Transverse colon (tissue), 4 donors: ENCODE measurements at regions of chr3 and their contacts with region 1.

Region 1: DNA sequence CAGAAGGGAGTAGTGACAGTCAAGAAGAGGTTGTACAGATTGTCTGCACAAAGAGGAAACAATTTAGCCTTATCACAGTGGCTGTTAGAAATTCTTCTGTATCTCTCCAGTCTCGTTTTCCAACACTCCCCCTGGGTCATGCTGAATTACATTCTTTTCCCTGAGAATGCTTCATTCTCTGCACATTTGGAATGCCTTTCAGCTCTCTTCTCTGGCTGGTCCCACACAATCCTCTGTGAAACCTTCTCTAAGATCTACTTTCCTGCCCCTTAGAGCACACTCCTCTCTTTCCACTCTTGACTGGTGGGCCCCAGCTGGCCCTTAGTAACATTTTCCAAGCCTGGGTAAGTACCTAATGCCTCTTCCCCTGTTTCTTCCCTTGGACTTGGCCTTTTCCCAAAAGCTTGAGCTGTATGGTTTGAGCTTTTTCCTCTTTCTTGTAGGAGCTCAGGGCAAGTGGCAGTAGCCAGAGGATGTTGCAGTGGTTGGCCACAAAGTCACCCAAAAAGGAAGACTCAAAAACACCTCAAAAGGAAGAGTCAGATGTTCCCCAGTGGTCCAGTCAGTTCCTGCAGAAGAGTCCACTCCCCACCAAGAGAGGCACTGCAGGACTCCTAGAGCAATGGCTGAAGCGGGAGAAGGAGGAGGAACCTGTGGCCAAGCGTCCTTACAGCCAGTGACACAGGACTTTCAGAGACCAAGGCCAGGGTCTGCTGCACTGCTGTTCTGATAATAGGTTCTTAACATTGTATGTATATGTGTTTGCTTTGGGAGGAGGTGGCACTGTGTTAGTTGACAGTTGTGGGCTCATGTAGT is 25.7 kb downstream of the HMCES start:
- DNase-seq: no peak
- H3K4me3 ChIP-seq: no peak overlapping the region
- H3K27ac ChIP-seq: peak overlapping the region; percentile 24 to 79 (median 69)
- H3K4me1 ChIP-seq: peaks cover 0 to 4% (median 0%) of the 10 kb centered on the region in 4 donors
- H3K27me3 ChIP-seq: no peaks in the 10 kb centered on the region
- CTCF ChIP-seq: no peak
- EP300 ChIP-seq: no peak
- POLR2A ChIP-seq: no peak

Region 2: DNA sequence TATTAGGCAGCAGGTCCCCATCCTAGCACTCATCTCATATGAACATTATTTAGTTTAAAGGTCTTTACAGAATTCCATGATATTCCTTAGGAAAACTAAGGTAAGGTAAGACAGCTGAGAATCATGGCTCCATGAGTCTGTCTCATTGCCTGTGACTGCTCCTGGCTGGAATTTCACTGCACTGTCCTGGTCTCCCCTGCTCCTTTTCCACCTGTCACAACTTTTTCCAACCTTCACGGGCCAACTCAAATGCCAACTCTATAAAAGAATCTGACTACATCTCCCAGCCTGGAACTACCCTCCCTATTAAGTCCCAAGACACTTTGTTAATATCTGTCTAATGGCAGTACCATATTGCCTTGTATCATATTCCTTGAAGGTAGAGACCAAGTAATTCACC is 128.3 kb before region 1 on chr3:
- in situ Hi-C with region 1: no loop called
- intact Hi-C with region 1: no loop called
- DNase-seq: no peak
- H3K4me3 ChIP-seq: no peak overlapping the region
- H3K27ac ChIP-seq: no peak overlapping the region
- H3K4me1 ChIP-seq: peaks cover 33 to 94% (median 58%) of the 10 kb centered on the region in 4 donors
- H3K27me3 ChIP-seq: no peaks in the 10 kb centered on the region
- CTCF ChIP-seq: no peak
- EP300 ChIP-seq: no peak
- POLR2A ChIP-seq: no peak

Region 3: DNA sequence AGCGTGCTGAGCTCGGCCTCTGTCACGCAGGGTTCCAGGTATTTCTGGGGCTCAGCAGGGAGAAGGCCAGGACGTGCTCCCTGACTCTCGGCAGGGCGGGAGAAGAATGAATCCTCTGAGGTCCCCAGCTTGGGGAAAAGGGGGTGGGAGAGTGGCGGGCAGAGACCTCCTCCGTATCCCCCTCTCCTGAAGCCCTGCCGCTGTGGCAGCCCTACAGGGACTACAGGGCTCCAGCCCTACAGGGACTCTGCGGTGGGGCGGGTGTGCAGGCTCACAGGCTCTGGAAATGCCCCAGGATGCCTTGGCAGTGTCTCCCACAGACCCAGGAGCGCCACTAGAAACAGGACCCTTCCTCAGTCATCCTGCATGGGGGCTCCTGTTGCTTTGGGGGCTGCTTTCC is 20.5 kb after region 1 on chr3:
- in situ Hi-C with region 1: no loop called
- intact Hi-C with region 1: loop called (anchors 1 kb)
- DNase-seq: no peak
- H3K4me3 ChIP-seq: no peak overlapping the region
- H3K27ac ChIP-seq: no peak overlapping the region
- H3K4me1 ChIP-seq: no peaks in the 10 kb centered on the region
- H3K27me3 ChIP-seq: no peaks in the 10 kb centered on the region
- CTCF ChIP-seq: no peak
- EP300 ChIP-seq: no peak
- POLR2A ChIP-seq: no peak